ENCODE measurements at regions of chr19 and their contacts with region 1.

Region 1: GRCh38 chr19:56314562-56315077 is at the start of gene ZSCAN5A:
- DNase-seq: peak; percentile 96 to 99 (median 98)

Region 2: GRCh38 chr19:56252699-56253422 is 61.8 kb before region 1 on chr19:
- intact Hi-C with region 1: loop called (anchors 10 kb)
- DNase-seq: peak; percentile 13 to 90 (median 56)

Region 3: DNA sequence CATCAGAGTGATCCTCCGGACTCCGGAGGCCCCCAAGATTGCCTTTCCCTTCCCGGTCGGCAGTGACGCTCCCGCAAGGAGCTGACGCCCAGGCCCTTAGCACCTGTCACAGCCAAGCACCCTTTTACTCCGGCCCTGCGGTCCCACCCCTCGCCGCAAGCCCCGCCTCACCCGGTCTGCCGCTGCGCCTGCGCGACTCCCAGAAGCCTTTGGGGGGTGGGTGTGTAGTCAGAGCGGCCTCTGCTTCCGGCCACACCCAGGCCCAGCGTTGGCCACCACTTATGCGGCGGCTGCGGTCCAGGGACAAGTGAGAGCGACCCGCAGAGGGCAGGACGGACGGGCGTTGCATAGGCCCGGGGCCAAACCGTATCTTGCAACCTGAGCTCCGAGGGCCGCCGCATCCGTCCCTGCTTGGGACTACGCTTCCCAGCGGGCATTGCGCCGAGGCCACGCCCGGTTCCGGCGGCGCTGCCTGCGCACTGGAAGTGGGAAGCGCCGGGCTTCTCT is 223.7 kb after region 1 on chr19:
- intact Hi-C with region 1: no loop called
- DNase-seq: peak; percentile 92 to 99 (median 96)

Measured in posterior cingulate gyrus (tissue), 11 donors.